H1 (cell line): ENCODE measurements at regions of chr13 and their contacts with region 1.

Region 1: DNA sequence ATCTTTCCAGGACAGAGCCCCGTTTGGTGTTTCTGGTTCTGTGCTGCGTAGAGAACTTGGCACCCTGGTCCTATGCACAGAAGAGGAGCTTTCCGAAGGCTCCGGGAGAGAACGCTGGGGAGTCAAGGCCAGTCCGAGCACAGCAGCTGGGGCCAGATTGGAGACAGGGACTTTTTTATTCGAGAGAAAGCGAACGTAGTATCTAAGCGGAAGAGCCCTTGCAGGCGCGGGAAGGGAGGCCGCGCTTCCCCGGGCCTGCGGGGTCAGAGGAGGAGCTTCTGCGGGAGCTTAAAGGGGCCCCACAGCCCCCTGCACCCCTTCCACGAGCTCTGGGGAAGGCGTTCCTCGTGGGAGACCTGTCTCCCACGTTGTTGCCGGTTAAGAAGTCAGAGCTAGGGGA is 48.6 kb upstream of the ARHGEF7 start:
- DNase-seq: no peak
- H3K4me3 ChIP-seq: peak overlapping the region in 2 of 4 experiments; percentile 10 to 68; a peak in 2 of 8 replicates
- H3K27ac ChIP-seq: no peak overlapping the region
- H3K4me1 ChIP-seq: peaks cover 12 to 32% (median 23%) of the 10 kb centered on the region in 4 experiments
- H3K27me3 ChIP-seq: peaks cover 0 to 16% (median 11%) of the 10 kb centered on the region in 4 experiments; a peak in 6 of 7 replicates
- CTCF ChIP-seq: no peak
- EP300 ChIP-seq: no peak
- POLR2A ChIP-seq: no peak
- RAD21 ChIP-seq: no peak

Region 2: DNA sequence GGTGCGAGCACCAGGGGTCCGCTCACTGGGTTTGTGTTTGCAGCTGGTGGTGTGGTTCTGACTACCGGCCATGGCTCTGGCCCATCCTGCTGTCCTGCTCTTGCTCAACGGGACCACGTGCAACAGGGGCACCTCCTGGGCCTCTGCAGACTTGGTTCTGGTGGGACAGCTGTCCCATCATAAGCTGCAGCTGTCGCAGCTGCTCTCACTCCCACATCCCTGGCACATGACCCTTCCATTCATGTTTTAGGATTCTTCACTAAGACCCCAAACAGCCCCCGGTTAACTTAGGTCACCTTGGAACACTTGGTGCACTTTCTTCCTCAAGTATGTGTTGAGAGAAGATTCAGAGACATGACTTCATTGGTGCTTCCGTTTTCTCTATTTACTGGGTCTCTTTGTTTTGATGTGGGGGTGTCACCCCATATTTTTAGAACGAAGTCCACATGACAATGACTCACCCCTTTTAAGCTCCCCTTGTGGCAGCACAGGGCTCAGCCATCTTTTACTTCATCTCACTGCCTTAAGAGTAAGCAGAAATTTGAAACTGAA is 19.9 kb before region 1 on chr13:
- CTCF ChIA-PET with region 1: interaction called, 19 read pairs
- POLR2A ChIA-PET with region 1: no interaction called
- DNase-seq: no peak
- H3K4me3 ChIP-seq: no peak overlapping the region
- H3K27ac ChIP-seq: no peak overlapping the region
- H3K4me1 ChIP-seq: no peaks in the 10 kb centered on the region
- H3K27me3 ChIP-seq: no peaks in the 10 kb centered on the region; a peak in 1 of 7 replicates
- CTCF ChIP-seq: no peak
- EP300 ChIP-seq: no peak
- POLR2A ChIP-seq: no peak
- RAD21 ChIP-seq: no peak

Region 3: GRCh38 chr13:111095031-111095840 is 28.7 kb after region 1 on chr13:
- CTCF ChIA-PET with region 1: interaction called, 20 read pairs
- POLR2A ChIA-PET with region 1: no interaction called
- DNase-seq: no peak
- H3K4me3 ChIP-seq: no peak overlapping the region
- H3K27ac ChIP-seq: no peak overlapping the region
- H3K4me1 ChIP-seq: no peaks in the 10 kb centered on the region; a peak in 1 of 7 replicates
- H3K27me3 ChIP-seq: no peaks in the 10 kb centered on the region
- CTCF ChIP-seq: no peak
- EP300 ChIP-seq: no peak
- POLR2A ChIP-seq: no peak
- RAD21 ChIP-seq: no peak

Region 4: DNA sequence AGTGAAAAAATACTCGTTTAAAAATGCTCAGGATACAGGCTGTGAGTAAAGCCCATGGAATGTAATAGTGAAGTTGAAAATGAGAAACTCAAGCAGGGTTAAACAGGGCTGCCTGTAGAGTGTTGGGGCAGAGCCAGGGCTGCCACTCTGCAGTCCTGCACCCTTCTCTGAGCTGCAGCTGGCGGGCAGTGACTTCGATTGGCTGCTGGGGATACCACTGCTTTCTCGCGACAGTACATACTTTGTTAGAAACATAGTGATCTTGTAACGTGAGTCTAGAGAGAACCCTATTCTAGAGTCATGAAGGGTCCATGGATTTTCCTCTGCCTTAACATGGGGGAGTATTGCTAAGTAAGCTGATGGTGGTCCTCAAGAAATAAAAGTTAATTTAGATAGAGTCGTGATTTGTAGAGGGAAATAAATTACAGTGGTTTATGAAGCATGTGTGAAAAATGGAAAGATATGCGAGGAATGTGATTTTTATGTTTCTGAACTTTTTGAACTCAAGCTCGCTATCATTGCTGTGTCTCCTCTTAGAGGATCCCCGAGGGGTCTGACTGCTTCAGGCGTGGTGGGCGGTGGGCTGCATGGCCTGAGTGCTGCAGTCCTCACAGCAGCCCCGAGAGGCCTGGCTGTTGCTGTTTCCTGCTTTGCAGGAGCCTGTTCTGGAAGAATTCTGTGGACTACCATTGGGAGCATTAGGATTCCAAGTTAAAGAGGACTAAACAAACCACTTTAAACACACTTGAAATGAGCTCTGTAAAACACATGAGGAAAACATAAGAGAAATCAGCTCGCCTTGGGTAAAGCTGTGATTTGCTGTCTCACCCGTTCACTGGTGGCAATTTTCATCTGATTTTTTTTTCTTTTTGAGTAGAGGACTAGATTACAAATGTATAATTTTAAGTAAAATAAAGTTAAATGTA is 144.3 kb after region 1 on chr13:
- CTCF ChIA-PET with region 1: interaction called, 13 read pairs
- POLR2A ChIA-PET with region 1: no interaction called
- DNase-seq: no peak
- H3K4me3 ChIP-seq: 0 out of 8 replicates have a peak overlapping the region, but pooled peaks of 1 of the 4 experiments have one; percentile 19
- H3K27ac ChIP-seq: no peak overlapping the region; the same call in 1 of the 2 replicates
- H3K4me1 ChIP-seq: peaks cover 13 to 43% (median 37%) of the 10 kb centered on the region in 4 experiments
- H3K27me3 ChIP-seq: no peaks in the 10 kb centered on the region
- CTCF ChIP-seq: no peak
- EP300 ChIP-seq: no peak
- POLR2A ChIP-seq: no peak
- RAD21 ChIP-seq: no peak

Region 5: GRCh38 chr13:111216166-111216960 is 149.8 kb after region 1 on chr13:
- CTCF ChIA-PET with region 1: interaction called, 13 read pairs
- POLR2A ChIA-PET with region 1: no interaction called
- DNase-seq: peak in 1 of 2 experiments; percentile 72
- H3K4me3 ChIP-seq: peak overlapping the region in 1 of 4 experiments; percentile 35; a peak in 1 of 8 replicates
- H3K27ac ChIP-seq: no peak overlapping the region
- H3K4me1 ChIP-seq: peaks cover 23 to 47% (median 35%) of the 10 kb centered on the region in 4 experiments
- H3K27me3 ChIP-seq: no peaks in the 10 kb centered on the region
- CTCF ChIP-seq: peak; percentile 58 to 76 (median 62)
- EP300 ChIP-seq: no peak
- POLR2A ChIP-seq: no peak
- RAD21 ChIP-seq: peak; percentile 65 to 71

Region 6: GRCh38 chr13:111225166-111225565 is 158.6 kb after region 1 on chr13:
- CTCF ChIA-PET with region 1: interaction called, 10 read pairs
- POLR2A ChIA-PET with region 1: no interaction called
- DNase-seq: no peak
- H3K4me3 ChIP-seq: no peak overlapping the region
- H3K27ac ChIP-seq: no peak overlapping the region
- H3K4me1 ChIP-seq: peaks cover 0 to 9% (median 1%) of the 10 kb centered on the region in 4 experiments; a peak in 2 of 7 replicates
- H3K27me3 ChIP-seq: no peaks in the 10 kb centered on the region
- CTCF ChIP-seq: no peak
- EP300 ChIP-seq: no peak
- POLR2A ChIP-seq: no peak
- RAD21 ChIP-seq: no peak